SK-N-SH (cell line): ENCODE measurements at regions of chr1 and their contacts with region 1.

Region 1: GRCh38 chr1:16243936-16244649 is 7.1 kb upstream of the CPLANE2 start:
- DNase-seq: peak; percentile 71
- H3K4me3 ChIP-seq: no peak overlapping the region; a peak in 1 of 4 replicates
- H3K27ac ChIP-seq: peak overlapping the region in 1 of 2 experiments; percentile 6; a peak in 1 of 4 replicates
- H3K4me1 ChIP-seq: peaks cover 13 to 38% of the 10 kb centered on the region in 2 experiments; a peak in 3 of 4 replicates
- H3K27me3 ChIP-seq: no peaks in the 10 kb centered on the region
- CTCF ChIP-seq: peak; percentile 83
- EP300 ChIP-seq: no peak
- RAD21 ChIP-seq: peak; percentile 94

Region 2: DNA sequence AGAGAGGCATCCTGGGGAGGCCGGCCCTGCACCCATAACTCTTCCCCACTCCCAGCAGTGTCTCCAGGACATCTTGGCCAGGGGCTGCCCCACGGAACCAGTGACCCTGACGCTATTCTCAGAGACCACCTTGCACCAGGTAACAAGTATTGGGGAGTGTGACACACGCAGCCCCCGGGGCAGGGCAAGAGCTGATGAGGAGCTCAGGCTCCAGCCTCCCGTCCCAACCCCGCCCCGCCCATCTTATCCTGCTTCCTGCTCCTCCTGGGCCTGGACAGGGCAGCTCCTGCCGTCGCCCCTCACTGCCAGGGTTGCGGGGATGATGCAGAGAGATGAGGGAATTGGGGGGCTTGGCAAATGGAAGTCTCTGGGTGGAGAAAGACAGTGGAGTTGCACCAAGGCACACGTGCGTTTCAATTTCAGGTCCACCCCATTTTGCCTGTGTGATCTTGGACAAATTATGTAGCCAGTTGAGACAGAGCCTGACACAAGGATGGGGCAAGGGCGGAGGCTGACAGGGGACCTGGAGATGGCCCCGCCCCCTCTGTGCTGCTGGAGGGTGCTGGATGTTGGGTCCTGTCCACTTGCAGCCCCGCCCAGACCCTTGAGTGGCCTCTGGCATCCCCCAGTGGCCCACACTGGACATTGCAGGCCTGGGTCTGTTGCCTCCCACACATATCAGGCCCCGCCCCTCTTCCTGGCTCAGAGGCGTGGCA is 211.5 kb before region 1 on chr1:
- CTCF ChIA-PET with region 1: no interaction called
- POLR2A ChIA-PET with region 1: no interaction called
- DNase-seq: peak; percentile 97
- H3K4me3 ChIP-seq: no peak overlapping the region; a peak in 1 of 4 replicates
- H3K27ac ChIP-seq: no peak overlapping the region
- H3K4me1 ChIP-seq: peaks cover 0 to 4% of the 10 kb centered on the region in 2 experiments; a peak in 1 of 4 replicates
- H3K27me3 ChIP-seq: no peaks in the 10 kb centered on the region
- CTCF ChIP-seq: peak; percentile 78
- EP300 ChIP-seq: no peak
- RAD21 ChIP-seq: peak; percentile 92

Region 3: GRCh38 chr1:16073490-16074119 is 170.5 kb before region 1 on chr1 and contains the start of gene FAM131C:
- CTCF ChIA-PET with region 1: interaction called, 94 read pairs
- POLR2A ChIA-PET with region 1: no interaction called
- DNase-seq: peak; percentile 95
- H3K4me3 ChIP-seq: peak within 1 kb of the TSS; percentile 53 to 65
- H3K27ac ChIP-seq: no peak within 1 kb of the TSS
- H3K4me1 ChIP-seq: peaks cover 15 to 22% of the 10 kb centered on the region in 2 experiments; a peak in 3 of 4 replicates
- H3K27me3 ChIP-seq: no peaks in the 10 kb centered on the region
- CTCF ChIP-seq: peak; percentile 46
- EP300 ChIP-seq: no peak
- RAD21 ChIP-seq: no peak
- polyA plus RNA-seq, gene FAM131C: 0.97 and 1.6 TPM in 2 replicates

Region 4: DNA sequence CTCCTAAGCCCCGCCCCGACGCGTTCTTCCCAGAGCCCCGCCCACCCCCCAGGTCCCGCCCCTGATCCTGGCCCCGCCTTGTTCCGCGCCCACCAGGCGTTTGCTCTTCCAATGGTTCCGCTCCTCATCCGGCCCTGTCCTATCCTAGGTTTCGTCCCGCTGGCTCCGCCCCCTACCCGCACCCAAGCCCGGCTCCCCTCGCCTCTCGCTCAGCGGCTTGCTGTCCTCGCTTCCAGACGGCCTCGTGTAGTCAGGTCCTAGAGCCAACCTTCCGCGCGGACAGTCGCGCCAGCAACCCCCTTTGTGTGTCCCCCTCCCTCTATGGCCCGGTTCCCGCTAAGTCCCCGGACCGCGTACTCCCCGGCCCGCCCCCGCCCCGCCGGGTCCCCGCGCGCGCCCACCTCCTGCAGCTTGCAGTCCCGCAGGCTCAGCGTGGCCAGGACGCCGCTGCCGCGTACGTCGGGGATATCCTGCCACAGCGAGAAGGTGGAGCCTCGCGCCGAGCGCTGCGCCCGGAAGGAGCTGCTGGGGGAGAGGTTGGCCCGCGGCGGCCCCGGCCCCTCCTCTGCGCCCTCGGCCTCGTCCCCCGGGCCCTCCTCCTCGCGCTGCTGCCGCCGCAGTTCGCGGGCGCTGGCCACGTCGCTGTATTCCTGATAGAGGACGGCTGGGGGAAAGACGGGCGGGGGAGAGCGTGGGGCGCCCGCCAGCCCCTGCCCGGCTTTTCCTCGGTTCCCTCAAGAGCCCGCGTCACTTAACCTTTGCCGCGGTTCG is 37.4 kb before region 1 on chr1:
- CTCF ChIA-PET with region 1: interaction called, 18 read pairs
- POLR2A ChIA-PET with region 1: interaction called, 5 read pairs
- DNase-seq: peak; percentile 97
- H3K4me3 ChIP-seq: peak overlapping the region; percentile 53 to 63
- H3K27ac ChIP-seq: peak overlapping the region; percentile 84 to 90
- H3K4me1 ChIP-seq: peaks cover 0 to 22% of the 10 kb centered on the region in 2 experiments; a peak in 1 of 4 replicates
- H3K27me3 ChIP-seq: no peaks in the 10 kb centered on the region
- CTCF ChIP-seq: no peak
- EP300 ChIP-seq: 0 out of 4 replicates have a peak, but pooled peaks of 1 of the 2 experiments have one; percentile 2
- RAD21 ChIP-seq: no peak

Region 5: GRCh38 chr1:16231331-16232315 is 12.5 kb before region 1 on chr1:
- CTCF ChIA-PET with region 1: interaction called, 13 read pairs
- POLR2A ChIA-PET with region 1: no interaction called
- DNase-seq: no peak
- H3K4me3 ChIP-seq: no peak overlapping the region
- H3K27ac ChIP-seq: no peak overlapping the region
- H3K4me1 ChIP-seq: peaks cover 0 to 8% of the 10 kb centered on the region in 2 experiments; a peak in 1 of 4 replicates
- H3K27me3 ChIP-seq: no peaks in the 10 kb centered on the region
- CTCF ChIP-seq: no peak
- EP300 ChIP-seq: no peak
- RAD21 ChIP-seq: no peak

Region 6: DNA sequence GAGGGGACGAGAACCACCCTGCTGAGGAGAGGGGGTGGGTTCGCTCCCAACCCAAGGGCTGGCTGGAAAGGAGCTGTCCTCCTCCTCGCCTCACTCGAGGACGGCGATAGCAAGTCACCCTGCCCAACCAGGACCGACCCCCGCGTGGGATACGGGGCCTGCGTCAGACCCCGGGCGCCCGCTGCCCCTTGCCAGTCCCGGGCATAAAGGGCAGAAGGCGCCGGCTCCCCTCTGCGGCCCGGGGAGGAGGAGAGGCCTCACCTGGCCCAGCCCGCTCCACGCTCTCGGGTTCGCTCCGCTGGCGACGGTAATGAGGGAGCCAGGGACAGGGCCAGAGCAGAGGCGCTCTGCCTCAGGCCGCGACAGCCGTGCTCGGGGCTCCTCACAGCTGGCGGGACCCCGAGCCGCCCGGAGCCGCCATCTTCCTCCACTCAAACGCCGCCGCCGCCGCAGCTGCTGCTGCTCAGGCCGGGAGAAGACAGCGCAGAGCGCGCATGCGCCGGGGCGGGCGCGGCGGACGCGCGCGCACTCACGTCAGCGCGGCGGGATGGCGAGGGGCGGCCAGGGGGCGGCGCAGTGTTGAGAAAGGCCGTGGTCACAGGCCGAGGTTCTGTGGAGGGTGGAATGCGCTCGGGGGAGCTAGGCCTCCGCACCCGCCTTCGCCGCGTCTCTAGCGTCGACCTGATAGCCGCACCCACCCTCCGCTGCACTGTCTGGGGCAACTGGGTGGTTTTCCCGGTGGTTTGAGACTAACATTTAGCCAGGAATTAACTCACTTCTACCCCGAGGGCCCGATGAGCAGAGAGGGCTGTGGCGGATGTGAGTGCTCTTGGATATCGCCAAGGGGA is 108.1 kb after region 1 on chr1 and contains the start of gene FBXO42:
- CTCF ChIA-PET with region 1: interaction called, 10 read pairs
- POLR2A ChIA-PET with region 1: interaction called, 5 read pairs
- DNase-seq: peak; percentile 97
- H3K4me3 ChIP-seq: peak within 1 kb of the TSS; percentile 69 to 82
- H3K27ac ChIP-seq: peak within 1 kb of the TSS; percentile 75 to 92
- H3K4me1 ChIP-seq: peaks cover 6 to 18% of the 10 kb centered on the region in 2 experiments; a peak in 3 of 4 replicates
- H3K27me3 ChIP-seq: no peaks in the 10 kb centered on the region
- CTCF ChIP-seq: peak; percentile 52
- EP300 ChIP-seq: no peak; a peak in 1 of 4 replicates
- RAD21 ChIP-seq: peak; percentile 6; the same call in 1 of the 2 replicates
- polyA plus RNA-seq, gene FBXO42: 8.6 and 10.3 TPM in 2 replicates

Region 7: DNA sequence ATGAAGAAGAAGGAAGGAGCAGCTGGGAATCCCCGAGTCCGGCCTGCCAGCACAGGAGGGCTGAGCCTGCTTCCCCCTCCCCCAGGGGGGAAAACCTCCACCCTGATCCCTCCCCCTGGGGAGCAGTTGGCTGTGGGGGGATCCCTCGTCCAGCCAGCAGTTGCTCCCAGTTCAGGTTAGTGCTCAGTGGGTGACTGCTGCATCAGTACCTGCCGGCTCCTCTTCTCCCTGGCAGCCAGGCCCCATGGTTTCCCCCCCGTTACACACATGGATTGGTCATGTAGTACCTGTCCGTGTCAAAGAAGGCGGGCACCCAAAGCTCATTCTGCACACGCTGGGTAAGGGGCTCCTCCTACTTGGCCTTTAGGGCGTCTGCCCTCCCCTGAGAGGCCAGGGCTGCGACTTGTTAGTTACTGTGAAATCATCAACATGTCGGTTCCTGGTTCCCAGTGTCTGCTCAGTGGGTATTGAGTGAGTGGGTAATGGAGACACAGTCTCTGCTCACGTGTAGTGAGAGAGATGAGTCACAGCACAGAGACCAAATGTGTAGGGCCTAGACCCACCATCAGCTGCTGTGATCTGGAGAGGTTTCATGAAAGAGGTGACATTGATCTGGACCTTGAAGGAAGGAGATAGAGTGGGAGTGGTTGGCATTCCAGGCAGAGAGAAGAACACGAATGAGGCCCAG is 207.9 kb after region 1 on chr1:
- CTCF ChIA-PET with region 1: no interaction called
- POLR2A ChIA-PET with region 1: no interaction called
- DNase-seq: no peak
- H3K4me3 ChIP-seq: no peak overlapping the region
- H3K27ac ChIP-seq: no peak overlapping the region
- H3K4me1 ChIP-seq: no peaks in the 10 kb centered on the region
- H3K27me3 ChIP-seq: no peaks in the 10 kb centered on the region
- CTCF ChIP-seq: no peak
- EP300 ChIP-seq: no peak
- RAD21 ChIP-seq: no peak